ENCODE measurements at regions of chr6 and their contacts with region 1.

Region 1: GRCh38 chr6:137389150-137389704 is 105.0 kb downstream of the OLIG3 start:
- DNase-seq: peak; percentile 88
- ATAC-seq: peak; percentile 99
- H3K4me3 Mint-ChIP-seq: peak overlapping the region; percentile 1
- H3K27ac Mint-ChIP-seq: peak overlapping the region; percentile 64
- H3K4me1 Mint-ChIP-seq: peaks cover 40% of the 10 kb centered on the region
- H3K27me3 Mint-ChIP-seq: no peaks in the 10 kb centered on the region

Region 2: DNA sequence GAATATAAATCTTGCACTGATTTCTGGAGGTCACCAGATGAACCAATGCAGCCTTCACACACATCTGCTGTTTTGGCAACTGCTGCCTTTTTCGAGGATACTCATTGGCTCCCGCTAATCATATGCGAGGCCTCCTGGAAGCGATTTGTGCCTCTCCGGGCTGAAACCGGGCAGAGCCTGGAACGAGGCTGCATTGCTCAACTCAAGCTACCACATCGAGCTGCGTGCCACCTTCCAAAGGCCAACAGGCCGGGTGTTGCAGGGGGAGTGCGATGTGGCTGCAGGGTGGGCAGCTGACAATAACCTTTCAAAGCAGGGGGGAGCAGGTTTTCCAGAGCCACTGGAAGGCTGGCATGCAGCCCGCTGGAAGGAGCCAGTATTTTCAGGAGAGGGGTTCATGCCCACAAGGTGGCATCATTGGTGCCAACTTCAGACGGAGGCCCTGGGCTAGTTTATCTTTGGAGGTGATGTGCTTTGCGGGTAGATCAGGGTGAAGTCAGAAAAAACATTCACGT is 47.5 kb before region 1 on chr6:
- CTCF ChIA-PET with region 1: no interaction called
- POLR2A ChIA-PET with region 1: no interaction called
- intact Hi-C with region 1: loop called in 1 of 2 experiments (anchors 2 kb)
- DNase-seq: peak; percentile 60
- ATAC-seq: peak; percentile 47
- H3K4me3 Mint-ChIP-seq: peak overlapping the region; percentile 19
- H3K27ac Mint-ChIP-seq: no peak overlapping the region
- H3K4me1 Mint-ChIP-seq: peaks cover 7% of the 10 kb centered on the region
- H3K27me3 Mint-ChIP-seq: peaks cover 7% of the 10 kb centered on the region

Region 3: DNA sequence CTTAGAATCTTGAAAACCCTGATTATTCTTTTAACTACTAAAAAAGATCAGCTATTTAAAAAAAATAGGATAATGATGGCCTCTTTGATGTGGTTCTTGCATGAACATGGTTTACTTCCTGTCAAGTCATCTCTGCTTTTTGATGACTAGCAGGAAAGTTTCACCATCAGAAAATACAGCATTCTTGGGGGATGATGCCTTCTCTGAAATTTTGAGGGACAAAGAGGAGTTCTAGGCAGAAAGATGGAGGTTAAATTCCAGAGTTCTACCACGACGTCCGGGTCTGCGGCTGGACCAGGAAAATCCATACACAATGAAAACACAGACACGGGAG is 25.5 kb before region 1 on chr6:
- CTCF ChIA-PET with region 1: interaction called, 4 read pairs
- POLR2A ChIA-PET with region 1: interaction called, 3 read pairs
- intact Hi-C with region 1: loop called in 1 of 2 experiments (anchors 1 kb)
- DNase-seq: no peak
- ATAC-seq: peak; percentile 87
- H3K4me3 Mint-ChIP-seq: no peak overlapping the region
- H3K27ac Mint-ChIP-seq: no peak overlapping the region
- H3K4me1 Mint-ChIP-seq: peaks cover 23% of the 10 kb centered on the region
- H3K27me3 Mint-ChIP-seq: peaks cover 4% of the 10 kb centered on the region

Region 4: DNA sequence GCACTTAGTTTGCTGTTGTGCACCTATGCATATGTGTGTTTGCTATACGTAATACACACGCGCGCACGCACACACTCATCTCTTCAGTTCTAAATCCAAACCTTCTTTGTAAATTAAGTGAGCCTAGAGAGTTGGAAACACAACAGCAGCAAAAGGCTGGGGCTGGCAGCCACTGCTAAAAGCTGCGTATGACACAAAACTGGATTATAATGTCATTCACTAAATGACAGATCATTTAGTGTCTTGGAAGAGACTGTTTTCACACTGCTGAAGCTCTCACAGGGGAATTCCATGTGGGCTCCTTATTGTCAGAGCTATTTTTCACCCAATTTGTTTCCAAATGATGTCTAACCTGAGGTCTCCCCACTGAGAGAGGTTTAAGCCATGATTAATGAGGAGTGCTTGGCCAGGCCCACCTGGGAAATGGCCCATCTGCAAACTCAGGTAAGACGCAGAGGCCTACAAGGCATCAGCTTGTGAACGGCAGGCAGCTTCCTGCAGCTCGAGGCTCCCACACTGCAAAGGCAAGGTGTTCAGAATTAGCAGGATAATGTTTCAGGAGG is 10.7 kb after region 1 on chr6:
- CTCF ChIA-PET with region 1: interaction called, 4 read pairs
- POLR2A ChIA-PET with region 1: no interaction called
- intact Hi-C with region 1: loop called in 1 of 2 experiments (anchors 1 kb)
- DNase-seq: peak; percentile 55
- ATAC-seq: peak; percentile 87
- H3K4me3 Mint-ChIP-seq: no peak overlapping the region
- H3K27ac Mint-ChIP-seq: no peak overlapping the region
- H3K4me1 Mint-ChIP-seq: peaks cover 10% of the 10 kb centered on the region
- H3K27me3 Mint-ChIP-seq: no peaks in the 10 kb centered on the region